Endothelial cell of umbilical vein (primary cell): ENCODE measurements at regions of chr1 and their contacts with region 1.

Region 1: DNA sequence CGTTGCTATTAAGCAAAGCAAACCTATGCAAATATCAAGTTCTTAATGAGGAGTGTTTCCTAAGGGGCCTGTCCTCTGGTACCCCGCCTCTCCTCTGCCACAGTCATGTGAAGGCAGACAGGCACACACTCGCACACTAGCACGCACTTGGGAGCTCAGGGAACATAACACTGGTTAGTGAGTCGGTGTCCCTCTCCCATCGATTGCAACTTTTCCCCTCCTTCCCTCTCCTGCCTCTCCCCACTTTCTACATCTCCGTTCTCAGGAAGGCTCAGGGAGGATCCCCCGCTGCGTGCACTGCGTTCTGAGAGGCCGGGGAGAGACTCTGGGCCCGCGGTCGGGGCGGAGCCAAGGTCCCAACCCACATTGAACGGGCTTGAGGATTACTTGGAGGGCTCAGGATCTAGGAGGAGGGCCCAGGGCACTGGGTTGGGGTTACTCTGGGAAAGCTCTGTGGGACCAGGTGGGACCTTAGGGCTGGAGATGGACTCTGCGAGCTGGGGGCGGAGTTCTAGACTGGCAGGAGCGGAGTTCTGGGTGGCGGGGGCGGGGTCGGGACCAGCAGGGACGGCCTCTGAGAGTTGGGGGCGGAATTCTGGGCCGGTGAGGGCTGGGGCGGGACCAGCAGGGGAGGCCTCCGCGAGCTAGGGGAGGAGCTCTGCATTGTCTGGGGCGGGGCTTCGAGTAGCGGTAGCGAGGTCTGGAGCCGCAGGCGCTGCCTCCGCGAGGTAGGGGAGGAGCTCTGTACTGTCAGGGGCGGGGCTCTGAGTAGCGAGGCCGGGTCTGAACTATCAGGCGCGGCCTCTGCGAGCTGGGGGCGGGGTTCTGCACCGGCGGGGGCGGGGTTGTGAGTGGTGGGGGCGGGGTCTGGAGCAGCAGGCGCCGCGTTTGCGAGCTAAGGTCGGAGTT is 533 bp upstream of the LEPR start:
- DNase-seq: peak; percentile 99
- H3K4me3 ChIP-seq: peak overlapping the region; percentile 64 to 76 (median 71)
- H3K27ac ChIP-seq: peak overlapping the region; percentile 62
- H3K4me1 ChIP-seq: peaks cover 37% of the 10 kb centered on the region
- H3K27me3 ChIP-seq: no peaks in the 10 kb centered on the region
- CTCF ChIP-seq: no peak
- POLR2A ChIP-seq: peak; percentile 5

Region 2: GRCh38 chr1:65067491-65068201 is 352.3 kb before region 1 on chr1:
- CTCF ChIA-PET with region 1: no interaction called
- POLR2A ChIA-PET with region 1: no interaction called
- dilution Hi-C with region 1: no loop called
- intact Hi-C with region 1: loop called (anchors 1 kb)
- DNase-seq: peak; percentile 84
- H3K4me3 ChIP-seq: peak overlapping the region; percentile 48 to 88 (median 85)
- H3K27ac ChIP-seq: peak overlapping the region; percentile 82
- H3K4me1 ChIP-seq: peaks cover 14% of the 10 kb centered on the region
- H3K27me3 ChIP-seq: no peaks in the 10 kb centered on the region
- CTCF ChIP-seq: no peak
- POLR2A ChIP-seq: no peak

Region 3: DNA sequence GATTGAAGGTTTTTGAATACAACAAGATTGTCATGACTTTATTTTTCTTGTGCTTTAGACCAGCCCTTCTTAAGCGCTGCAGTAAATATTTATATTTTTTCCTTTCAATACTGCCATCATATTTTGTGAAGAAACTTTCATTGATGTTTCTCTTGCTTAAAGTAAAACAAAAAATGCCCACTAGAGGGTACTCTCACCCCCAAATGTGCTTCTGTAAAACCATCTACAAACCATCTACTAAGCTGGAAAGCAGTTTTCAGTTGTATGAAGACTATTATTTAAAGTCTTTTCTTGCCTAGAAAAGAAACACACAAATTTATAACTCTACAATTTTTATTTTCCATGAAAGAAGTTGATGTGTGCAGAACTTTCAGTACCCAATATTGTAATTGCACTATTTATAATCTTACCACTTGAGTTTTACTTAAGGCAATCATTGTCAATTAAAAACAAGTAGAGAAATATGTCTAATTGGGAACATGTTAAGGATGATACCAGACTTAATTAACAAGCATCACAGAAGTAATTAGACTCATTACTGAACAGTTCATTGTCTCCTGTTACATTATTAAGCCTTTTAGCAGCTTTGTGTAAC is 11.3 kb after region 1 on chr1:
- CTCF ChIA-PET with region 1: interaction called, 31 read pairs
- POLR2A ChIA-PET with region 1: interaction called, 6 read pairs
- dilution Hi-C with region 1: no loop called
- intact Hi-C with region 1: loop called (anchors 1 kb)
- DNase-seq: peak; percentile 79
- H3K4me3 ChIP-seq: peak overlapping the region in 1 of 3 experiments; percentile 26
- H3K27ac ChIP-seq: peak overlapping the region; percentile 97
- H3K4me1 ChIP-seq: peaks cover 33% of the 10 kb centered on the region
- H3K27me3 ChIP-seq: no peaks in the 10 kb centered on the region
- CTCF ChIP-seq: peak; percentile 35 to 36
- POLR2A ChIP-seq: no peak

Region 4: DNA sequence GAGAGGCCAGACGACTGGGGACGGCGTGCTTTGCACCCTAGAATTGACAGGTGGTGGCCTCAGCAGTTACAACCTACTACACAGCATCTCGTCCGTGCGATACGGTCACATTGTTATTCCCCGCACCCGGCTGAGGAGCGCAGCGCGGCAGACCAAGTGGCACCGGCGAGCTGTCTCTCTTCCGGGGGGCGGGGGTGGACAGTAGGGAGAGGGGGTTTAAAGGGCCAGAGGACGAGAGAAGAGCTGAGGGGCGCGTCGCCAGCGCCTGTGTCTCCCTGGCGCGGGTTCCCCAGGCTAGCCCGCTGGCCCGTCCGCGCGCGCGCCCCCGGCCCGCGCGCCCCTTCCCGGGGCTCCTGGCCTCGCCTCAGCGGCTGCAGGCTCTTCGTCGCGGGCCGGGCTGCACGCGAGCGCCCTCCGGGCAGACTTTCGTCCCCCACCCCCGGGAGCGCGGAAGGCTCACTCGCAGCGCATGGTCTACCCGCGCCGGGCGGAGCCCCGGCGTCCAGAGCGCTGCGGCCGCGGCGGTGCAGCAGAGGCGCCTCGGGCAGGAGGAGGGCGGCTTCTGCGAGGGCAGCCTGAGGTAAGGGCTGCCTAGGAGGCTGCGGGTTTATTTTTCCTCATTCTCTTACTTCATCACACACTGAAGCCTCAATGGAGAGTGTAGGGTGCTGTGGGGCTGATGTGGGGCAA is 372.9 kb after region 1 on chr1 and contains the start of gene PDE4B:
- CTCF ChIA-PET with region 1: no interaction called
- POLR2A ChIA-PET with region 1: no interaction called
- dilution Hi-C with region 1: no loop called
- intact Hi-C with region 1: loop called (anchors 10 kb)
- DNase-seq: peak; percentile 22
- H3K4me3 ChIP-seq: peak within 1 kb of the TSS; percentile 22 to 57 (median 24)
- H3K27ac ChIP-seq: no peak within 1 kb of the TSS
- H3K4me1 ChIP-seq: peaks cover 13% of the 10 kb centered on the region
- H3K27me3 ChIP-seq: peaks cover 20 to 39% of the 10 kb centered on the region in 2 experiments
- CTCF ChIP-seq: no peak
- POLR2A ChIP-seq: no peak
- total RNA-seq, gene PDE4B: 69.8 and 72.1 TPM in 2 replicates

Region 5: DNA sequence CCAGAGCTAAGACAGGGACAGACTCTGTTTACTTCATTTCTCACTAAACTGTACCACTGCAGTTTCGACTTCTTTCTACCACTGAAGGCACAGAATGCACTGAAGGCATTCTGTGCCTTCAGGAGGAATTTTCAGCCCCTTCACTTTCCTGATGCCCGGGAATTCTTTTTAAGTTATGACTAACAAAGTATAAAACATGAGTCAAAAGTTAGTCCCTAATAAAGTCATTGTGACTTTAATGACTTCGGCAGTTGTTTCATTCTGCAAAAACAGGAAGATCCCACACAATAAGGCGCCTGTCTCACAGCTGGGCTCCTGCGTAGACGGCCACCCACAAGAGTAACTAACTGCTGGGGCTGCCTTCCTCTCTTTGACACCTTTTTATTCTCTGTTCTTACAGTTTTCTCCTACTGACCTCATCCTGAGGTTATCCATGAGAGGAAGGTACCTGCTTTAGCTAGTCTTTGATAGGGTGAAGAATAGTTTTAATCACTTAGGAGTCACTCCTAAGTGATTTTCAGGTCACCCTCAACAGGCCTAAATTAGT is 930.1 kb after region 1 on chr1:
- CTCF ChIA-PET with region 1: no interaction called
- POLR2A ChIA-PET with region 1: no interaction called
- dilution Hi-C with region 1: no loop called
- intact Hi-C with region 1: loop called (anchors 5 kb)
- DNase-seq: peak; percentile 93
- H3K4me3 ChIP-seq: peak overlapping the region in 1 of 3 experiments; percentile 3
- H3K27ac ChIP-seq: peak overlapping the region; percentile 96
- H3K4me1 ChIP-seq: peaks cover 100% of the 10 kb centered on the region
- H3K27me3 ChIP-seq: no peaks in the 10 kb centered on the region
- CTCF ChIP-seq: no peak
- POLR2A ChIP-seq: peak; percentile 14